ENCODE measurements at regions of chr2 and their contacts with region 1.

Region 1: GRCh38 chr2:47867205-47867604 is 39.1 kb downstream of the FBXO11 start:
- DNase-seq: peak in 1 of 2 donors; percentile 73
- H3K4me3 ChIP-seq: no peak overlapping the region
- H3K27ac ChIP-seq: peak overlapping the region in 4 of 5 donors; percentile 24 to 53 (median 46)
- H3K4me1 ChIP-seq: peaks cover 11 to 80% (median 56%) of the 10 kb centered on the region in 4 donors
- H3K27me3 ChIP-seq: no peaks in the 10 kb centered on the region
- CTCF ChIP-seq: no peak
- EP300 ChIP-seq: no peak
- POLR2A ChIP-seq: no peak

Region 2: DNA sequence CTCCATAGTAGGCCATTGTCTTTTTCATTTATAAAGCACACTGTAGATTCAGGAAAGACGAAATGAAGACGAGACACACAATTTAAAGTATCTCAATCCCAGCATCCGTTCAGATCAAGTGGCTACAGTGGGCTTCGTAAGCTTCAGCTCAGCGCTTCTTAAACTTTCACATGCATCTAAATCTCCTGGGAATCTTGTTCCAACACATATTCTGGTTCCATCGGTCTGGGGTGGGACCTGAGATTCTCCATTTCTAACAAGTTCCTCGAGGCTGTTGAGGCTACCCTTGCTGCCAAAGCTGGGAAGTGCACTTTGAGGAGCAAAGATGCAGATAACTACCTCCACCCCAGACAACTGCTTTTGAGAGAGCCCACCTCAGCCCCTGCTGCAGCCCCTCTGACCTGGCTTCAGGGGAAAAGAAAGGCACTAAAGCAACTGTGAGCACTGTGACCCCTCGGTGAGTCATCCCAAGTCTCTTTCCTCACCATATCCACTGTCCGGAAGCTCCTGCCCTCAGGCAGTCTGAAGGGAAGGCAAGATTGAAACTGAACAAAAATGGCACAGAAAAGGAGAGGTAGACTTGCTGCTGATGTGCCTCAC is 240.2 kb after region 1 on chr2:
- intact Hi-C with region 1: loop called (anchors 10 kb)
- DNase-seq: no peak
- H3K4me3 ChIP-seq: no peak overlapping the region
- H3K27ac ChIP-seq: peak overlapping the region in 4 of 5 donors; percentile 43 to 67 (median 54)
- H3K4me1 ChIP-seq: peaks cover 9 to 29% (median 26%) of the 10 kb centered on the region in 4 donors
- H3K27me3 ChIP-seq: no peaks in the 10 kb centered on the region
- CTCF ChIP-seq: no peak
- EP300 ChIP-seq: no peak
- POLR2A ChIP-seq: no peak

Region 3: DNA sequence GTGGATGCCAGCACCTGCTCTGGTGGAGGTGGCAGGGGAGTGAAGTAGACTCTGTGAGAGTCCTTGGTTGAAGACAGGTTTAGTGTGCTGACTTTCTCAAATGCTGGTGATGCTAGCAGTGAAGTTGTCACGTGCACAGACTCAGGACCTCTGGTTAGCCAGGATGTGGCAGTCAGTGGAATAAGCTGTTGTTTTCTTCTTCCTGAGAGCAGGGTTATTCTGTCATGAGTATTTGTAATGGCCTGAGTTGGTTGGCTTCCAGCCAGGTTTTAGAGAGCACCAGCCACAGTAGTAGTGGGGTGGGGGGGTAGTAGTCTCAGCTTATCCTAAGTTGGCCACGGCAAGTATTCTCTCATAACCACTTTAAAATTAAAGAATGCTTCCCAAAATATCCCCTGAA is 277.6 kb after region 1 on chr2:
- intact Hi-C with region 1: no loop called
- DNase-seq: peak in 1 of 2 donors; percentile 13
- H3K4me3 ChIP-seq: no peak overlapping the region
- H3K27ac ChIP-seq: no peak overlapping the region
- H3K4me1 ChIP-seq: no peaks in the 10 kb centered on the region
- H3K27me3 ChIP-seq: no peaks in the 10 kb centered on the region
- CTCF ChIP-seq: no peak
- EP300 ChIP-seq: no peak
- POLR2A ChIP-seq: no peak

Region 4: DNA sequence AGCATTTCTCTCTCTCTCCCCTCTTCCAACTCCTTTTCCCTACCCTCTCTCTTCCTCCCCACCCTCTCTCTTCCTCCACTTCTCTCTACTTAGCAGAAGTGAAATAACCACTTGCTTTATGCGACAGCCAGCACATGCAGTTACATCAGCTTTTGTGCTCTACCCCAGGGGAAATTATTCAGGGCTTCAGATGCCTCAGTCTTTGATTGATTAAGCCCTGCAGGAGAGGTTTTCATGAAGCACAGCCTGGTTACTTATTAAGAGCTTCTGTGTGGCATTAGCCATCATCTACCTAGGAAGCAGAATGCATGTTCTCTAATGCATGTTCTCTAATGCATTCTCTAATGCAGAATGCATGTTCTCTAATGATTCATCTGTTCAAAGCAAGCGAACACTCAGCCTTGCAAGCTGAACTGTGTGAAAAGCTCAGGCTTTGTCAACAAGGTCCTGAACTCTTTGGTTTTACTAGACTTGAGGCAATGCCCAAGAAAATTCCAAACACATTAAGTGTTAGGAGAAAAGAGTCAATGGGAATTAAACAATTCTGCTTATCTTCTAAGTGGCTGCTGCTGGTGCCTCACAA is 832.2 kb after region 1 on chr2:
- intact Hi-C with region 1: no loop called
- DNase-seq: peak in 1 of 2 donors; percentile 37
- H3K4me3 ChIP-seq: no peak overlapping the region
- H3K27ac ChIP-seq: no peak overlapping the region
- H3K4me1 ChIP-seq: no peaks in the 10 kb centered on the region
- H3K27me3 ChIP-seq: no peaks in the 10 kb centered on the region
- CTCF ChIP-seq: no peak
- EP300 ChIP-seq: no peak
- POLR2A ChIP-seq: no peak

Measured in stomach (tissue), 19 donors.